ENCODE measurements at regions of chr1 and their contacts with region 1.

Region 1: DNA sequence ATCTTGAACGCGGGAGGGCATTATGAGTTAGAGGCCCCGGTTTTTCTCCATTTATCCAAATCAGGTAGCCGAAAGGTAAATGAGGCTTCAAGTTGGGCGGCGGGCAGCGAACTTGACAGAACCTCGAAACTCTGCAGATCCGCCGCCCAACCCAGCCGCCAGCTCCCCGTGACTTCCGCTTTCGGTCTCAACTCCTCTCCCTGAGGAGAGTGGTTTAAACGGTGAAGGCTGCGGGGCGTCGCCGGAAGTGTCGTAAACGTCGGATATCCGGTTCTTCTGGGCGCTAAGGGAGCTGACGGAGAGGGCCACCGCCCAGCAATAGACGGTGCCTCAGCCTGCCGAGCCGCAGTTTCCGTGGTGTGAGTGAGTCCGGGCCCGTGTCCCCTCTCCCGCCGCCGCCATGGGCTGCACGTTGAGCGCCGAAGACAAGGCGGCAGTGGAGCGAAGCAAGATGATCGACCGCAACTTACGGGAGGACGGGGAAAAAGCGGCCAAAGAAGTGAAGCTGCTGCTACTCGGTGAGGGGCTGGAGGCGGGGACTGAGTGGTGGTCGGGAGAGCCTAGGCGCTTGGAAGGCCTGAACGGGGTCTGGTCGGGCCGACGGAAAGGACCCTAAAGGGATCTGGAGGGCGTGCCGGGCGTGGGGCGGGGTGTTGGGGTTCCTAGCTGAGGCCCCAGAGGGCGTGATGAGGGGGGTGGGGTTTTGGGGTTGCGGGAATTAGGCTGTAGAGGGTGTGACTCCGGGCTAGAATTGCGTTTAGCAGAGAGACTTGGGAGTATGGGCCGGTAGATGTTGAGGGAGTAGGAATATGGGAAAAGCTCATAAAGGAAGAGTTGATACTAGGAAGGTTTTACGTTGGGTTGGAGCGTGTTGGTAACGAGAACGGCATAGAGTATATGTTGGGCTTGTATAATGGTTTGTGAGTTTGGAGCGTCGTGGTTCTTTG is at the start of gene GNAI3:
- DNase-seq: peak; percentile 90 to 98 (median 96)
- ATAC-seq: peak; percentile 85
- H3K4me3 ChIP-seq: peak within 1 kb of the TSS; percentile 74 to 98
- H3K4me3 Mint-ChIP-seq: peak within 1 kb of the TSS; percentile 98
- H3K27ac ChIP-seq: peak within 1 kb of the TSS; percentile 89 to 97
- H3K27ac Mint-ChIP-seq: peak within 1 kb of the TSS; percentile 99
- H3K4me1 ChIP-seq: peaks cover 28% of the 10 kb centered on the region
- H3K4me1 Mint-ChIP-seq: peaks cover 60% of the 10 kb centered on the region
- H3K27me3 ChIP-seq: no peaks in the 10 kb centered on the region
- H3K27me3 Mint-ChIP-seq: no peaks in the 10 kb centered on the region
- CTCF ChIP-seq: no peak
- total RNA-seq, gene GNAI3: 6.8 to 7.1 TPM

Region 2: DNA sequence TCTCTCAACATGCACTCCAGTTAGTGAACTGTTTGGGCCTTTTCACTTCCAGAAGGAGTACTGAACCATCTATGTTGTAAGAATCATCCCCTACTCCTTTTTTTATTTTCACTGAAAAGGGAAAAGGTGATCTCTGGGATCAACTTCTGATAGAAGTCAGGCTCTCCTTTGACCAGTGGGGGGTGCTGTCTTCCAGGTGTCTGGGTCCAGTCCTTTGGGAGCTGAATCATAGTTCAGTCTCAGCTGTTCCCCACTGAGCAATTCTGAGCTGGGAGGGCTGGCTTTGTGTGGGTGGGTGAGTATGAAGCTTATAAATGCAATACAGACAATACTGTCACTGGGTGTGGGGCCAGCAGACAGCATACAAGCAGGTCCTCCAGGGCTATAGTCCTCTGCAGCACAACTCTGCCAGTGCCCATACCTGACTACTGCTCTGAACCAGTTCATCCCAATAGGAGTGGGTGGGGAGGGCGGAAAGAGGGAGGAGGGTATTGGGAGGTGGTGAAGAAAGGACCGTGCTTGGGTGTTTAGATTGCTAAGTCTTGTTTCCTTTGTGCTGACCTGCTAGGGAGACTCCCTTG is 347.4 kb before region 1 on chr1:
- CTCF ChIA-PET with region 1: no interaction called
- POLR2A ChIA-PET with region 1: no interaction called
- intact Hi-C with region 1: no loop called
- DNase-seq: peak in 5 of 9 experiments; percentile 23 to 37 (median 29)
- ATAC-seq: peak; percentile 23
- H3K4me3 ChIP-seq: no peak overlapping the region
- H3K4me3 Mint-ChIP-seq: no peak overlapping the region
- H3K27ac ChIP-seq: no peak overlapping the region
- H3K27ac Mint-ChIP-seq: no peak overlapping the region
- H3K4me1 ChIP-seq: peaks cover 10% of the 10 kb centered on the region
- H3K4me1 Mint-ChIP-seq: peaks cover 14% of the 10 kb centered on the region
- H3K27me3 ChIP-seq: no peaks in the 10 kb centered on the region
- H3K27me3 Mint-ChIP-seq: no peaks in the 10 kb centered on the region
- CTCF ChIP-seq: peak; percentile 8

Region 3: DNA sequence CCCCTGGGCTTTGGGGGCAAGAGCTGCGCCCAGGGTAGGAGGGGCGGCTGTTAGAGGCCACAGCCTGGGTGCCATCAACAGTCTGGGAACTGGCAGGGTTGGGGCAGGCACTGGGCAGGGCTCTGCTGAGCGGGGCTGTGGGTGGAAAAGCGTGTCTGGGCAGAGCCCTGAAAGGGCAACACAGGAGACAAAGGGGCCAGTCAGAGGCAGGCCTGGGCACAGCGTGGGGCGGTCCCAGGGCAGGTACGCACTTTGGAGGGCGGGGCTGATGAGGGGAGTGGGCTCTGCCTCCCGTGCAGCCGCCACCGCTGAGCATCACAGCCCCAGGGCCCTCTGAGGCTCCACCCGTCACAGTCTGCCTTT is 285.4 kb before region 1 on chr1:
- CTCF ChIA-PET with region 1: no interaction called
- POLR2A ChIA-PET with region 1: no interaction called
- intact Hi-C with region 1: no loop called
- DNase-seq: no peak
- ATAC-seq: peak; percentile 27
- H3K4me3 ChIP-seq: no peak overlapping the region
- H3K4me3 Mint-ChIP-seq: no peak overlapping the region
- H3K27ac ChIP-seq: no peak overlapping the region
- H3K27ac Mint-ChIP-seq: no peak overlapping the region
- H3K4me1 ChIP-seq: no peaks in the 10 kb centered on the region
- H3K4me1 Mint-ChIP-seq: no peaks in the 10 kb centered on the region
- H3K27me3 ChIP-seq: no peaks in the 10 kb centered on the region
- H3K27me3 Mint-ChIP-seq: no peaks in the 10 kb centered on the region
- CTCF ChIP-seq: no peak

Region 4: GRCh38 chr1:109404838-109405237 is 143.8 kb before region 1 on chr1:
- CTCF ChIA-PET with region 1: no interaction called
- POLR2A ChIA-PET with region 1: no interaction called
- intact Hi-C with region 1: no loop called
- DNase-seq: peak in 2 of 9 experiments; percentile 18 to 48
- ATAC-seq: peak; percentile 42
- H3K4me3 ChIP-seq: no peak overlapping the region
- H3K4me3 Mint-ChIP-seq: no peak overlapping the region
- H3K27ac ChIP-seq: peak overlapping the region; percentile 18 to 45
- H3K27ac Mint-ChIP-seq: peak overlapping the region; percentile 58
- H3K4me1 ChIP-seq: peaks cover 4% of the 10 kb centered on the region
- H3K4me1 Mint-ChIP-seq: peaks cover 16% of the 10 kb centered on the region
- H3K27me3 ChIP-seq: no peaks in the 10 kb centered on the region
- H3K27me3 Mint-ChIP-seq: no peaks in the 10 kb centered on the region
- CTCF ChIP-seq: no peak

Region 5: GRCh38 chr1:109426278-109427170 is 122.1 kb before region 1 on chr1 and contains the start of gene PSMA5:
- CTCF ChIA-PET with region 1: no interaction called
- POLR2A ChIA-PET with region 1: interaction called, 3 read pairs
- intact Hi-C with region 1: loop called (anchors 1 to 5 kb)
- DNase-seq: peak; percentile 87 to 99 (median 93)
- ATAC-seq: peak; percentile 90
- H3K4me3 ChIP-seq: peak within 1 kb of the TSS; percentile 83 to 84
- H3K4me3 Mint-ChIP-seq: peak within 1 kb of the TSS; percentile 98
- H3K27ac ChIP-seq: peak within 1 kb of the TSS; percentile 80 to 90
- H3K27ac Mint-ChIP-seq: peak within 1 kb of the TSS; percentile 99
- H3K4me1 ChIP-seq: peaks cover 39% of the 10 kb centered on the region
- H3K4me1 Mint-ChIP-seq: peaks cover 39% of the 10 kb centered on the region
- H3K27me3 ChIP-seq: no peaks in the 10 kb centered on the region
- H3K27me3 Mint-ChIP-seq: no peaks in the 10 kb centered on the region
- CTCF ChIP-seq: no peak
- total RNA-seq, gene PSMA5: 30.9 to 32.6 TPM

Region 6: DNA sequence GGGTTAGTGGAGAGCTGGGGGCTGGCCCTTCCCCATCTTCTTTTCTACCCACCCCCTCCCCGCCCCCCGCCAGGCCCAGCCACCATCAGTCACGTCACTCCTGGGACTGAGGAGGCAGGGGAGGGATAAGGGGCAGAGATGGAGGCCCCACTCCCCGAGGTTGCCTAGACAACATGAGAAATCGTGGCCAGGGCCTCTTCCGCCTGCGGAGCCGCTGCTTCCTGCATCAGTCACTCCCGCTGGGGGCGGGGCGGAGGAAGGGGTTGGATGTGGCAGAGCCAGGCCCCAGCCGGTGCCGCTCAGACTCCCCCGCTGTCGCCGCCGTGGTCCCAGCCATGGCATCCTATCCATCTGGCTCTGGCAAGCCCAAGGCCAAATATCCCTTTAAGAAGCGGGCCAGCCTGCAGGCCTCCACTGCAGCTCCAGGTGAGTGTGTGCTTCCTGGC is 72.3 kb after region 1 on chr1:
- CTCF ChIA-PET with region 1: interaction called, 152 read pairs
- POLR2A ChIA-PET with region 1: interaction called, 27 read pairs
- intact Hi-C with region 1: loop called (anchors 1 kb)
- DNase-seq: peak; percentile 91 to 99 (median 97)
- ATAC-seq: peak; percentile 87
- H3K4me3 ChIP-seq: peak overlapping the region; percentile 90 to 92
- H3K4me3 Mint-ChIP-seq: peak overlapping the region; percentile 98
- H3K27ac ChIP-seq: peak overlapping the region; percentile 86 to 91
- H3K27ac Mint-ChIP-seq: peak overlapping the region; percentile 97
- H3K4me1 ChIP-seq: peaks cover 50% of the 10 kb centered on the region
- H3K4me1 Mint-ChIP-seq: peaks cover 64% of the 10 kb centered on the region
- H3K27me3 ChIP-seq: no peaks in the 10 kb centered on the region
- H3K27me3 Mint-ChIP-seq: no peaks in the 10 kb centered on the region
- CTCF ChIP-seq: no peak

Region 7: DNA sequence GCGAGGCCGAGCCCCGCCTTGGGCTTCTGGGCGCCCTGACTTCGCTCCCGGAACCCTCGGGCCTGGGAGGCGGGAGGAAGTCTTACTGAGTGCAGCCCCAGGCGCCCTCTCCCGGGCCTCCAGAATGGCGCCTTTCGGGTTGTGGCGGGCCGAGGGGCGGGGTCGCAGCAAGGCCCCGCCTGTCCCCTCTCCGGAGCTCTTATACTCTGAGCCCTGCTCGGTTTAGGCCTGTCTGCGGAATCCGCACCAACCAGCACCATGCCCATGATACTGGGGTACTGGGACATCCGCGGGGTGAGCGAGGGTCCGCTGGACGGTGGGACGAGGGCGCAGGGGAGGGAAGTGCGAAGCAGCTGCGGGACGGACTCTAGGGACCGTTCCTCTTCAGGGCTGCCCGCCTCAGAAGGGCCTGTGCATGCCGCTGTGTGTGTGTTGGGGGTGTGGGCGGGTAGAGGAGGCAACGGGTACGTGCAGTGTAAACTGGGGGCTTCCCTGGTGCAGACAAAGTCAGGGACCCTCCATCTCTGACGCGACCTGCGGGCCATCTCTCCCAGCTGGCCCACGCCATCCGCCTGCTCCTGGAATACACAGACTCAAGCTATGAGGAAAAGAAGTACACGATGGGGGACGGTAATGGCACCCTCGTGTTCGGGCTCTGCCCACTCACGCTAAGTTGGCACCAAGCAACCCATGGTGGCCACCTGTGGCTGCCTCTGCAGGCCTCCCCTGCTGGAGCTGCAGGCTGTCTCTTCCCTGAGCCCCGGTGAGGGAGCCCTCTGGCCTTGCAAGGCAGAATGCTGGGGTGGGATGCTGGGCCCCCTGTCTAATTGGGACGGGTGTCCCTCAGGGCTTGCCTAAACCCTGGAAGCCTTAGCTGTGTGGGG is 139.3 kb after region 1 on chr1 and contains the start of gene GSTM1:
- CTCF ChIA-PET with region 1: interaction called, 3 read pairs
- POLR2A ChIA-PET with region 1: interaction called, 3 read pairs
- intact Hi-C with region 1: loop called (anchors 2 to 5 kb)
- DNase-seq: peak in 5 of 9 experiments; percentile 46 to 92 (median 85)
- ATAC-seq: peak; percentile 98
- H3K4me3 ChIP-seq: peak within 1 kb of the TSS; percentile 60 to 63
- H3K4me3 Mint-ChIP-seq: peak within 1 kb of the TSS; percentile 87
- H3K27ac ChIP-seq: peak within 1 kb of the TSS; percentile 43 to 53
- H3K27ac Mint-ChIP-seq: peak within 1 kb of the TSS; percentile 91
- H3K4me1 ChIP-seq: no peaks in the 10 kb centered on the region
- H3K4me1 Mint-ChIP-seq: peaks cover 8% of the 10 kb centered on the region
- H3K27me3 ChIP-seq: no peaks in the 10 kb centered on the region
- H3K27me3 Mint-ChIP-seq: no peaks in the 10 kb centered on the region
- CTCF ChIP-seq: no peak
- total RNA-seq, gene GSTM1: 11.5 to 14.0 TPM

Region 8: GRCh38 chr1:109910123-109910962 is 361.7 kb after region 1 on chr1 and contains the start of gene CSF1:
- CTCF ChIA-PET with region 1: no interaction called
- POLR2A ChIA-PET with region 1: no interaction called
- intact Hi-C with region 1: loop called in 1 of 2 experiments (anchors 10 kb)
- DNase-seq: peak; percentile 24 to 84 (median 55)
- ATAC-seq: peak; percentile 50
- H3K4me3 ChIP-seq: peak within 1 kb of the TSS; percentile 53 to 66
- H3K4me3 Mint-ChIP-seq: peak within 1 kb of the TSS; percentile 88
- H3K27ac ChIP-seq: peak within 1 kb of the TSS in 1 of 2 experiments; percentile 29
- H3K27ac Mint-ChIP-seq: peak within 1 kb of the TSS; percentile 83
- H3K4me1 ChIP-seq: peaks cover 32% of the 10 kb centered on the region
- H3K4me1 Mint-ChIP-seq: peaks cover 61% of the 10 kb centered on the region
- H3K27me3 ChIP-seq: no peaks in the 10 kb centered on the region
- H3K27me3 Mint-ChIP-seq: no peaks in the 10 kb centered on the region
- CTCF ChIP-seq: no peak
- total RNA-seq, gene CSF1: 5.6 to 5.8 TPM

Measured in CD8-positive, alpha-beta T cell (primary cell).